PC-3 (cell line): ENCODE measurements at regions of chr5 and their contacts with region 1.

Region 1: GRCh38 chr5:128777052-128777451 is 188.2 kb upstream of the SLC27A6 start:
- DNase-seq: no peak
- ATAC-seq: peak; percentile 20; the same call in 1 of the 2 replicates
- H3K4me3 ChIP-seq: no peak overlapping the region
- H3K27ac ChIP-seq: no peak overlapping the region
- H3K4me1 ChIP-seq: peaks cover under 1% of the 10 kb centered on the region; the same call in 1 of the 2 replicates
- H3K27me3 ChIP-seq: peaks cover 2% of the 10 kb centered on the region; the same call in 1 of the 2 replicates
- CTCF ChIP-seq: no peak

Region 2: DNA sequence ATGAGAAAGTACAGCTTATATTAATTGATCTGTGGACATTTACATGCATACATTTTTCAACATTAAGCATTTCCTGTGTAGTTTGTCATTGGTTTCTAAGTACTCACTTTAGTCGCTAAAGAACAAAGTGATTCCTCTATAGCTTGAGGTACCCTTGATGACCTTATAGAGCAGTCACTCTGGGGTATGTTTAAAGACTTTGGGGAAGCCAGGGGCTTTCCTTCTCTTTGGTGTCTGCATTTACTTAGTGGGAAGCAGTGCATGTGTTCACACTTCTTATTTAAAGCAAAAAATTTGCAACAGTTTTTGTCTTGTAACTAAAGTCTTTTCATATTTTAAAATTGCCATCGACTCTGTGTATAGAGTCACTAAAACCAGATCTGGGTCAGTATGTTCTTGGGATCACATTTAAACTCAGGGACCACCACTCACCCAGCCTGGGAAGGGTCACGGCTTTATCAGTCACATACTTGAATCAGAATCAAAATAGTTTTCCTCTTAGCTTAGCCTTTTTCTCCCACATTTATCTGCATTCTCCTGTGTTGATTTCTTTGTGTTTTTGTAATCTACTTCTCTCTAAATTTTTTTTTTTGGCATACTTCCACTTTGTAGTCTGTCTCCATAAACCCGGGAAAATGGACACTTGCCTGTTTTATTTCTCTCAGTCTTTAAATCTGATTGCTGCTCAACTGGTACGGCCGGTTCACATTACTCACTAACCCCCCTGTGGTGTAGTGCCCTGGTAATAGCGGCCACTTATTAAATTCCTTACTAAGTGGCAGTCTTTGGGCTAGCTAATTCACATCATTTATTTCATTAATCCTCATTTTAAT is 95.1 kb before region 1 on chr5:
- CTCF ChIA-PET with region 1: no interaction called
- POLR2A ChIA-PET with region 1: no interaction called
- intact Hi-C with region 1: loop called (anchors 10 kb)
- DNase-seq: peak; percentile 86
- ATAC-seq: peak; percentile 81
- H3K4me3 ChIP-seq: no peak overlapping the region
- H3K27ac ChIP-seq: no peak overlapping the region
- H3K4me1 ChIP-seq: peaks cover 12% of the 10 kb centered on the region
- H3K27me3 ChIP-seq: no peaks in the 10 kb centered on the region
- CTCF ChIP-seq: no peak